ENCODE measurements at regions of chr18 and their contacts with region 1.

Region 1: GRCh38 chr18:62844850-62845643 is 129.7 kb downstream of the PHLPP1 start:
- DNase-seq: peak; percentile 69
- H3K4me3 Mint-ChIP-seq: peak overlapping the region; percentile 45
- H3K27ac Mint-ChIP-seq: peak overlapping the region; percentile 90
- H3K4me1 Mint-ChIP-seq: peaks cover 41% of the 10 kb centered on the region
- H3K27me3 Mint-ChIP-seq: no peaks in the 10 kb centered on the region

Region 2: DNA sequence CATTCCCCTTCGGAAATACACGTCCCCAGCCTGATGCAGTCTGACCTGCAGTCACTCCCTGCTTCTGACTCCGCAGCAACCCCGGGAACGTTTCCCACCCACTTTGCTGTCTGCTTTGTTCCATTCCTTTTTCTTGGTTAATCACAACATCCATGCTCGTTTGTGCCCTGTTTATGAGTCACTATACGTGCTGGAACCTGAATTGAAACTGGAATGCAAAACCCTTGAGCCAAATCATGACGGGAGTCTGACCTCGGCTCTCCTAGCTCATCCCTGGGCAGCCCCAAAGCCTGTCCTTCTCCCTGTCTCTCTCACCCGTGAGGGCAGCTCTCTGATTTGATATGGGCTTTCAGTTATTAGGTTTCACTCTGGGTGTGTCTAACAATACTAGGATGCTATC is 895.1 kb before region 1 on chr18:
- CTCF ChIA-PET with region 1: no interaction called
- POLR2A ChIA-PET with region 1: no interaction called
- intact Hi-C with region 1: loop called (anchors 5 kb)
- DNase-seq: no peak
- H3K4me3 Mint-ChIP-seq: no peak overlapping the region
- H3K27ac Mint-ChIP-seq: no peak overlapping the region
- H3K4me1 Mint-ChIP-seq: peaks cover 36% of the 10 kb centered on the region
- H3K27me3 Mint-ChIP-seq: peaks cover 28% of the 10 kb centered on the region

Region 3: GRCh38 chr18:62714671-62715435 is 130.2 kb before region 1 on chr18:
- CTCF ChIA-PET with region 1: interaction called, 5 read pairs
- POLR2A ChIA-PET with region 1: interaction called, 5 read pairs
- intact Hi-C with region 1: loop called (anchors 1 kb)
- DNase-seq: peak; percentile 97
- H3K4me3 Mint-ChIP-seq: peak overlapping the region; percentile 78
- H3K27ac Mint-ChIP-seq: peak overlapping the region; percentile 66
- H3K4me1 Mint-ChIP-seq: peaks cover 31% of the 10 kb centered on the region
- H3K27me3 Mint-ChIP-seq: peaks cover 2% of the 10 kb centered on the region

Region 4: GRCh38 chr18:62778976-62779869 is 65.8 kb before region 1 on chr18:
- CTCF ChIA-PET with region 1: no interaction called
- POLR2A ChIA-PET with region 1: no interaction called
- intact Hi-C with region 1: loop called (anchors 1 kb)
- DNase-seq: peak; percentile 22
- H3K4me3 Mint-ChIP-seq: no peak overlapping the region
- H3K27ac Mint-ChIP-seq: no peak overlapping the region
- H3K4me1 Mint-ChIP-seq: peaks cover 38% of the 10 kb centered on the region
- H3K27me3 Mint-ChIP-seq: no peaks in the 10 kb centered on the region

Region 5: GRCh38 chr18:62881509-62882016 is 36.5 kb after region 1 on chr18:
- CTCF ChIA-PET with region 1: no interaction called
- POLR2A ChIA-PET with region 1: no interaction called
- intact Hi-C with region 1: loop called (anchors 2 kb)
- DNase-seq: peak; percentile 24
- H3K4me3 Mint-ChIP-seq: no peak overlapping the region
- H3K27ac Mint-ChIP-seq: no peak overlapping the region
- H3K4me1 Mint-ChIP-seq: peaks cover 18% of the 10 kb centered on the region
- H3K27me3 Mint-ChIP-seq: no peaks in the 10 kb centered on the region

Region 6: DNA sequence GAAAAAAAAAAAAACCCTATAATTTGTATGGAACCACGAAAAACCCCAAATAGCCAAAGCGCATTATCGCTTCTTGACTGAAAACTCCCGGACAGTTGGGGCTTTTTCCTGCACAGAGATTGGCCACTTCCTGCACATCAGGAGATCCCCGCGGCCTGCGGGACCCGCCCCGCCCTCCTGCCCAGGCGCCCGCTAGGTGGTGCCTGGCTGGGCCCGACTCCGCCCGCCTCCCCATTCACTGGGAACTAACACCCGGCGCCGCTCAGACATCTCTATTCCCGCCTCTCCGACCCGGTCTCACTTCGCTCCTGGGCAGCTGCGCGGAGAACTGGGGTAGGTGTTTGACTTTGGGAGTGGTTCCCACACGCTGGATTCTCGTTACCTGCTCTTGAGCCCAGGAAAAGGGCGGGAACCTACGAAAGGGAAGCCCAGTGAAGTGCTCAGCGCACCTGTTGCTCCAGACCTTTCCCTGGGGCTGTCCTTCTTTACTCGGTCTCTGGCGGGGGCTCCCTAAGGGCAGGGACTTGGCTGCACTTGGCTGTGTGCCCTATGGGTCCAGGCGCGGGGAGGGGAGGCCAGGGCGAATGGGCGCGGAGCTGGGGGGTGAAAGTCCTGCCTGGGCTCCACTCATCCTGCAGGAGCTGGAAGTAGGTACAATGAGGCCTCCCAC is 1104.2 kb after region 1 on chr18 and contains the start of gene HMSD:
- CTCF ChIA-PET with region 1: no interaction called
- POLR2A ChIA-PET with region 1: no interaction called
- intact Hi-C with region 1: loop called (anchors 10 kb)
- DNase-seq: peak; percentile 88
- H3K4me3 Mint-ChIP-seq: peak within 1 kb of the TSS; percentile 85
- H3K27ac Mint-ChIP-seq: peak within 1 kb of the TSS; percentile 86
- H3K4me1 Mint-ChIP-seq: peaks cover 45% of the 10 kb centered on the region
- H3K27me3 Mint-ChIP-seq: peaks cover 13% of the 10 kb centered on the region
- total RNA-seq, gene HMSD: 18.9 to 19.5 TPM

Measured in activated CD4-positive, alpha-beta memory T cell treated with anti-CD3 and anti-CD28 coated beads for 36 hours (primary cell).